Activated naive CD4-positive, alpha-beta T cell treated with anti-CD3 and anti-CD28 coated beads for 36 hours (primary cell): ENCODE measurements at regions of chr12 and their contacts with region 1.

Region 1: GRCh38 chr12:68497702-68498101 is 113.0 kb upstream of the RAP1B start:
- DNase-seq: peak; percentile 17
- H3K4me3 Mint-ChIP-seq: peak overlapping the region; percentile 35
- H3K27ac Mint-ChIP-seq: peak overlapping the region; percentile 80
- H3K4me1 Mint-ChIP-seq: peaks cover 28% of the 10 kb centered on the region
- H3K27me3 Mint-ChIP-seq: no peaks in the 10 kb centered on the region

Region 2: DNA sequence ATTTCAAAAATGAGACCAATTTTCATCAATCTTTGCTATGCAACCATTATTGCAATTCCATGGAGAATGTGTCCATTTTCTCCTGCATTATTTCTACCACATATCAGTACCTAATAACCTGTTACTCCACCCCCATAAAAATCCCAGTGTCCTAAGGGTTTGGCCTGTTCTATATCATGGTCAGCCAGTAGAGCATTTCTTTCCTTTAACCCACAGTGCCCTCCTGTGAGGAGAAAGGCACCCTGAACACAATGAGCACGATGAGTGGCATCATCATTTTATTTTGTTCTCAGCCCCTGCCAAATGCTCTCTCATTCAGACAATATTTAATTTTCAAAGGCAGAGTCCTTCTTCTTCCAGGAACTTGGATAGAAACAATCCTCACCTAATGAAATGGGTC is 520.0 kb before region 1 on chr12:
- CTCF ChIA-PET with region 1: no interaction called
- intact Hi-C with region 1: no loop called
- DNase-seq: no peak
- H3K4me3 Mint-ChIP-seq: no peak overlapping the region
- H3K27ac Mint-ChIP-seq: no peak overlapping the region
- H3K4me1 Mint-ChIP-seq: peaks cover 10% of the 10 kb centered on the region
- H3K27me3 Mint-ChIP-seq: peaks cover 1% of the 10 kb centered on the region

Region 3: DNA sequence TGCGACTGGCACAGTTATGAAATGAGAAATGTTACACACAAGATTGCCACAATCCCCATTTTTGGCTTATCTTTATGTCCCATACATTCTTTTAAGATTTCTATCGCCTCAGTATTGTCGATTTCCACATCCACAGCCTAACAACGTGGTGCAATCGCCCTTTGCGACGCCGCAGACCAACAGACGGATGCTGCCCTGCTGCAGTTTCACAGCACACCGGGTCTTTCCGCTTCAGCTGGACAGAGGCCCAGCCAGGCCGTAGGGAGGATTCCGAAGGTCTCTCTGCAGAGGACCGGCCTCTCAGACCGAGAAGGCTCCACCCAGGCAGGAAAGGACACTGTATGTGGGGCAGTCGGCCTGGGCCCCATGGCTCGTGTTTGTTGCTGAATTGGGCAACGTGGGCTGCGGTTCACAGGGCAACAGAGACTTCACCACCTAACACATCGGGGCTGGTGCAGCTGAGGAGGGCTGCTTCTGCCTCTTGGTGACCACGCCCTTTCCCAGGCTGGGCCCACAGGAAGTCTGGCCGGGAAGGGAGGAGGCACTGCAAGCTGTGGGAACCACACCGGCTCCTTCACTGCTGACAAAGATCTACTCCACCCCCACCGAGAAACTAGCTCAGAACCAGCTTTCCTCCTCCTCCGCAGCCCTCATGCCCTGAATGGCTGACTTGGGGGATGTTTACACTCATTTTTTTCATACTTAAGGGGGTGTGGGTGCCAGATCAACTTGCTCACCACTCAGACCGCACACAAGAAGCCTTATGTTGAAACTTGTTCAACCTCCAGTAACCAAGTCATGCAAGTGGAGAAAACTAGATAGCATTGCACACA is 132.6 kb before region 1 on chr12:
- CTCF ChIA-PET with region 1: no interaction called
- intact Hi-C with region 1: loop called (anchors 1 kb)
- DNase-seq: peak; percentile 90
- H3K4me3 Mint-ChIP-seq: peak overlapping the region; percentile 79
- H3K27ac Mint-ChIP-seq: peak overlapping the region; percentile 90
- H3K4me1 Mint-ChIP-seq: peaks cover 57% of the 10 kb centered on the region
- H3K27me3 Mint-ChIP-seq: no peaks in the 10 kb centered on the region

Region 4: DNA sequence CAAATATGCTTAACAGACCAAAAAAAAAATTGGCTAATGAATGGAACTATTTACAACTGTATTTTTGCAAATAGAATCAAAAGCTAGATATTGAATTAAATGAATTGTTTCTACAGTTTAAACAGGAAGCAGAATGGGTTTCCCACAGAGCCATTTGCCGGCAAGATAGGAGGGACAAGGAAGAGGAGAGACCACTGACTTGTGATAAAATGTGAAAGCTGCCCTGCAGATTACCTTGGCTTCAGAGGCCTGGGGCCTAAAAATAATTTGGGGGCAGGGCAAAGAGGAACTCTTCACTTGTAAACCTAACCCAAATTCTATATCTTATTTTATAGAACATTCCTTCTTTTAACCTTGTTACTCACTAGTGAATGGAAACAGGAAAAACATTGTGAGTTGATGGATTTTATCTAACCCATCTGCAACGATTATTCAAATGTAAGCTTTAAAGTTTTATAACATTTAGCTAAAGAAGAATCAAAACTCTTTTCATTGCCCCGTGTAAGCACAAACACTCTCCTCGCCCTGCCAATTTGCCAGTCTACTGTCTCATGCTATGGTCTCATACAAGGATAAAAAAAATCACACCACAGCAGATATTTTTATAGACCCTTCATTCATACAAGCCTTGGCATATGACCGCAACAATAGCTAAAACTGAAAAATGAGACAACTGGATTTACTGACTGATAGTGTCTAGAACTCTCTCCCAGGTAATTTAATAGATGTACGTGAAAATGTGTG is 116.1 kb before region 1 on chr12:
- CTCF ChIA-PET with region 1: no interaction called
- intact Hi-C with region 1: no loop called
- DNase-seq: no peak
- H3K4me3 Mint-ChIP-seq: no peak overlapping the region
- H3K27ac Mint-ChIP-seq: no peak overlapping the region
- H3K4me1 Mint-ChIP-seq: peaks cover 15% of the 10 kb centered on the region
- H3K27me3 Mint-ChIP-seq: peaks cover 3% of the 10 kb centered on the region

Region 5: GRCh38 chr12:68482660-68483059 is 15.0 kb before region 1 on chr12:
- CTCF ChIA-PET with region 1: interaction called, 3 read pairs
- intact Hi-C with region 1: loop called (anchors 1 kb)
- DNase-seq: peak; percentile 28
- H3K4me3 Mint-ChIP-seq: no peak overlapping the region
- H3K27ac Mint-ChIP-seq: peak overlapping the region; percentile 42
- H3K4me1 Mint-ChIP-seq: peaks cover 37% of the 10 kb centered on the region
- H3K27me3 Mint-ChIP-seq: no peaks in the 10 kb centered on the region

Region 6: GRCh38 chr12:68587448-68587873 is 89.8 kb after region 1 on chr12:
- CTCF ChIA-PET with region 1: no interaction called
- intact Hi-C with region 1: loop called (anchors 2 kb)
- DNase-seq: peak; percentile 81
- H3K4me3 Mint-ChIP-seq: no peak overlapping the region
- H3K27ac Mint-ChIP-seq: peak overlapping the region; percentile 27
- H3K4me1 Mint-ChIP-seq: peaks cover 55% of the 10 kb centered on the region
- H3K27me3 Mint-ChIP-seq: no peaks in the 10 kb centered on the region

Region 7: GRCh38 chr12:68807576-68808387 is 310.1 kb after region 1 on chr12 and contains the start of gene MDM2:
- CTCF ChIA-PET with region 1: no interaction called
- intact Hi-C with region 1: loop called (anchors 5 kb)
- DNase-seq: peak; percentile 95
- H3K4me3 Mint-ChIP-seq: peak within 1 kb of the TSS; percentile 97
- H3K27ac Mint-ChIP-seq: peak within 1 kb of the TSS; percentile 98
- H3K4me1 Mint-ChIP-seq: peaks cover 24% of the 10 kb centered on the region
- H3K27me3 Mint-ChIP-seq: no peaks in the 10 kb centered on the region
- total RNA-seq, gene MDM2: 165 to 166 TPM